ENCODE measurements at regions of chr15 and their contacts with region 1.

Region 1: DNA sequence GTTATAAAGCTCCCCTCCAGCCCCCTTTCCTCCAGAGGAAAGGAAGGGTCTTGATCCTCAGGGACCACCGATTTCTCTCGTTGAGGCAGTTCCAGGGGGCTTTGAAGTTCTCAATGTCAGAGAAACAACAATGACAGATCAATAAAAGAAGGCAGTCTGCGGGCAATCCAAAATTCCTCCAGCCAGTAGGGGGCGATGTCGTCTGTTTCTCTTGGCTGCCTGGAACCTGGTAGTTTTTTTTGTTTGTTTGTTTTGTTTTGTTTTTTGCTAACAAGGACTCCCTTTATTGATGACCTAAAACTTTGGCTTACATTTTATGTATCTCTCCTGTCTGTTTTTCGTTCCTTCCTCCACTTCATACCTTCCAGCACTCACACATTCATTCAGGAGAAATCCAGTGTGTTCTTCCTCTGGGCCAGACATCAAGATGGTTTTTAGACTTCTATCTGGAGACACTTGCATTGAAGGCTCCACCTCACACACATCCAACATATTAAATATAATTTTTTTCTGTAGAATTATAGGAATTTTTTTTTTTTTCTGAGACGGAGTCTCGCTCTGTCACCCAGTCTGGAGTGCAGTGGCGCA is 276.6 kb downstream of the RPLP1 start:
- DNase-seq: peak; percentile 35 to 54
- H3K4me3 ChIP-seq: no peak overlapping the region
- H3K27ac ChIP-seq: no peak overlapping the region
- H3K4me1 ChIP-seq: no peaks in the 10 kb centered on the region
- H3K27me3 ChIP-seq: no peaks in the 10 kb centered on the region
- CTCF ChIP-seq: peak; percentile 30 to 76 (median 64)
- POLR2A ChIP-seq: no peak

Region 2: DNA sequence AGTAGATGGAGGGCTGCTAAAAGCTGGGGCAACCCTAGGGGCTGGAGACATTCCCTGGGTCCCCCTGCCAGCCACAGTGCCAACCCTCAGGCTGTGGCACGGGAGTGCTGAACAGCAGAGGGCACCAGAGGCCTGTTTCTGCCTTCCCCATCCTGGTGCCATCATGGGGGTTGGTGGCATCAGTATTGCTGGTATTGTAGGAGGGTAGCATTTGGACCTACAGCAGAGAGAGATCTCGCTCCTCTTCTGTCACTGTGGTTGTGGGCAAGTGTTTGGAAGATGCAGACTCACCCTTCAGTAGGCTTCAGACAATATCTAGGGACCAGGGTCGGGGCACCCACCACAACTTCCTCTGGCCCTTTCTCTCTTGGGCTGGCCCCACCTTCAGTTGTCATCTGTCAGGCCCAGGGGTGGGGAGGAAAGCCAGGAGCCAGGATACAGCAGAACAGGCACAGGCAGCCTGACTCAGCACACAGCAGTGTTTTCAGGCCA is 153.2 kb before region 1 on chr15:
- intact Hi-C with region 1: loop called (anchors 10 kb)
- DNase-seq: peak; percentile 65 to 71
- H3K4me3 ChIP-seq: no peak overlapping the region
- H3K27ac ChIP-seq: no peak overlapping the region
- H3K4me1 ChIP-seq: peaks cover 6 to 11% of the 10 kb centered on the region in 2 donors
- H3K27me3 ChIP-seq: no peaks in the 10 kb centered on the region
- CTCF ChIP-seq: peak; percentile 41 to 92 (median 70)
- POLR2A ChIP-seq: no peak

Region 3: GRCh38 chr15:69825941-69826828 is 96.9 kb after region 1 on chr15:
- intact Hi-C with region 1: no loop called
- DNase-seq: no peak
- H3K4me3 ChIP-seq: no peak overlapping the region
- H3K27ac ChIP-seq: no peak overlapping the region
- H3K4me1 ChIP-seq: peaks cover 5 to 8% of the 10 kb centered on the region in 2 donors
- H3K27me3 ChIP-seq: no peaks in the 10 kb centered on the region
- CTCF ChIP-seq: no peak
- POLR2A ChIP-seq: no peak

Region 4: DNA sequence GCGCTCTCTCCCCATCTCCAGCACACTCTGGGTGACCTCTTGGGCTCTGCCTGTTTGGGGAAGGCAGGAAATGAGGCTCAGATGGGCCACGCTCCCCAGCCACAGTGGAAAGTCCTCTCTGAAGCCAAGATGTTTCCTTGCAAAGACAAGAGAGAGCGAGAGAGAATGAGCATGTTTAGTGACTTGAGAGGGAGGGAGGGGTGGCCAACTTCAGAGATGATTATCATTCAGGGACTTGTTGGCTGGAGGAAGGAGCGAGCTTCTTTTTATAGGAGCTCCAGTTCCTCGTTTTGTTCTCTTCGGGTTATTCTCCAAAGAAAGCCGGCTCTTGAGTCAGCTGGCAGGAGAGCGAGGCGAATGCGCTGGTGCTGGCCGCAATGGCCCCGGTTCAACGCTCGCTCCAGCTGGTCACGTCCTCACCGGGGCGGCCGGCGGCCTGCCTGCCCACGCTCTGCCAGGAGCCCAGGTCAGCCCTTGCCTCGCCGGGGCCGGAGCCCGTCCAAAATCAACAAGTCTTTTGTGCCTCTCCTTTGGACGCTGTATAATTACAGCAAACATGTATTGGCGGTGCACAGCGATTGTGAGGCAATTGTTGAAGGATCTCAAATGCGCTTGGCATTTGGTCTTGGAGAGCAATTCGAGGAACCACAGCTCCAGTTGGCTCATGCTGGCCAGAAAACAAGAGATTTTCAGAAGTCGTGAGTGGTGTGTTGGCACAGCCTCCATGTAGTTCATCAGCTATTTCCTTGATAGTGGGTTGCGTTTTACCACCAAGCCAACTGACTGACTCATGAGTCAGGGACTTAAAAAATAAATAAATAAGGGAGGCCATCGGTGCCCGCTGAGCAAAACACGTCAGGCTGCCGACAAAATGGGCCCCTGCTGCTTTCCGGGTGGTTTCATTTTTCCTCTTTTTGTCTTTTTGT is 745.5 kb after region 1 on chr15:
- intact Hi-C with region 1: loop called (anchors 5 kb)
- DNase-seq: peak; percentile 21 to 30
- H3K4me3 ChIP-seq: no peak overlapping the region
- H3K27ac ChIP-seq: peak overlapping the region in 2 of 3 donors; percentile 0 to 41
- H3K4me1 ChIP-seq: peaks cover 0 to 15% of the 10 kb centered on the region in 2 donors
- H3K27me3 ChIP-seq: no peaks in the 10 kb centered on the region
- CTCF ChIP-seq: no peak
- POLR2A ChIP-seq: no peak

Measured in thyroid gland (tissue), 4 donors.